ENCODE measurements at regions of chr5 and their contacts with region 1.

Region 1: DNA sequence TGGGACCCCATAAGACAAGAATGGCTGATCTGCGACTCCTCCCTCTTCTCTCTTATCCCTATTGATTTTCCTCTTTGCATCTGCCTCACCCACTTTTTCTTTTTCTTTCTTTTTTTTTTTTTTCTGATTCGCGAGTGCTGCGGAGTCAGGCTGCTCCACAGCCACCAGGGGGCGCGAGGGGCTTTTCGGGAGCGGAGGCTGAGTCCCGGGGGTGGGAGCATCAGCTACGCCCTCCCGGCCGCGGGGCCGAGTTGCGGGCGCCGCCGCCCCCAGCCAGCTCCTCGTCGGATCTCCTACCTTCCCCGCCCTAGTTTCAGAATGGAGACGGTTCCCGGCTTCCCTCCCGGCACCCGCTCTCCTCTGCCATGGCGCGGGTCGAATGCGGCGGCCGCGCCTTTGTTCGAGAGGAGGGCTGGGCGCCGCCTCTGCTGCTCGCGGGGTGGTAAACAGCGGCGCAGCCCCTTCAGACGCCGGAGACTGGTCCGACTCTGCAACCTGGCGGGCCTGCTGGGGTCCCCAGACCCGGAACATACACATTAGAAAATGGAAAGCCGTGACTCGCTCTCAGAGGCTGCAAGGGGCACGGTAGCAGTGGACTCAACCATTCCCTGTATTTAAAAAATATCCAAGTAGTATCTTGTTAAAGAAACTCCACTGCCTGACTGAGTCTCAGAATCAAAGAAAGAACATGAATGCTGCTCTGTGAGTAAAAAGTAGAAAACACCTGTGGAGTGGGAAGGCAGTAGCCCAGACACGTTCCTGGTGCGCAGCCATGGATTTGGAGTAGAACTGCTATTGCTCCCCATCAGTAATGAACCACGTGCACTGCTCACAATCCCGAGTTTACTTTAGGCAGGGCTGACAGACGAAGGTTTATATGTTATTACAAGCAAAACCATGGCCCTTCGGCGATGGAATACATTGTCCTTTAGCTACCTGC is 55.7 kb downstream of the DPYSL3 start:
- DNase-seq: peak; percentile 72 to 74
- ATAC-seq: peak; percentile 76 to 80
- H3K4me3 ChIP-seq: peak overlapping the region; percentile 77 to 95 (median 82)
- H3K27ac ChIP-seq: peak overlapping the region; percentile 79 to 92 (median 90)
- H3K4me1 ChIP-seq: peaks cover 34 to 47% of the 10 kb centered on the region in 2 donors
- H3K27me3 ChIP-seq: no peaks in the 10 kb centered on the region
- CTCF ChIP-seq: peak; percentile 77 to 96 (median 88)
- POLR2A ChIP-seq: no peak

Region 2: DNA sequence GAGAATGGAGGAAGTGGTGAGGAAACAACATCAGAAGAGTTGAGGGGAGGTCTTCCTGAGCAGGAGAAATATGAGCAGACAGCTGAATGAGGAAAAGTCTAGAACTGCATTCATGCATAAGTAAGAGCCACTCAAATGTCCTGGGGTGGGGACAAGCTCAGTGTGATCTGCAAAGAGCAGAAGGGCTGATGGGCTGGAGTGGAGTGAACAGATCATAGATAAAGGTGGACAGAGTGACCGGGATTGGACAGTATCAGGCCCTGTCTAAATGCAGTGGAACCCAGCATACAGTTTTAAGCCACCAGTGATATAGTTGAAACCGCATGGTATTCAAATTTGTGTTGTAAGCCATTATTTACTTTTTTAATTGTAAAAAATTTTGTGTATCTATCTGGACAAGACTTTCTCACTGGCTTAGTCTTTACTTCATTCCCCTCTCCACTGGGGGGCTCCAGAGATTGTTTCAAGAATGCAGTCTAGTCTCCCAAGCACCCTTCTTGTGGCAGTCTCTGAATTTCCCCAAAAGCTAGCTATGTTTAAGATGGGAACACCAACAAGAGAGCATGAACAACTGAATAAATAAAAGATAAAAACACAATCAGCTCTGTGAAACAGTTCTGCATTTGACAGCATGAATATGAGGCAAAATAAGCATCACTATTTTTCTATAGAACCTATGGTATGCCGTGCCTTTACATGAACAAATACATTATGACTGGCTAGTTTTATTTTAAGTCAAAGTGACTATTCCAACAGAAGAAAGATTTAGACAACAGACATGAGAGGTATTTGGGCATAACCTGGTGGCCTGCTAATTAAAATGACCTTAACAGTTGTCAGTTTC is 230.0 kb before region 1 on chr5:
- in situ Hi-C with region 1: no loop called
- intact Hi-C with region 1: loop called (anchors 5 kb)
- DNase-seq: no peak
- ATAC-seq: peak; percentile 56 to 69
- H3K4me3 ChIP-seq: no peak overlapping the region
- H3K27ac ChIP-seq: no peak overlapping the region
- H3K4me1 ChIP-seq: no peaks in the 10 kb centered on the region
- H3K27me3 ChIP-seq: no peaks in the 10 kb centered on the region
- CTCF ChIP-seq: peak; percentile 18 to 64 (median 46)
- POLR2A ChIP-seq: no peak

Region 3: GRCh38 chr5:147407094-147407681 is 47.0 kb before region 1 on chr5:
- in situ Hi-C with region 1: no loop called
- intact Hi-C with region 1: loop called (anchors 2 kb)
- DNase-seq: no peak
- ATAC-seq: no peak
- H3K4me3 ChIP-seq: no peak overlapping the region
- H3K27ac ChIP-seq: peak overlapping the region; percentile 91 to 97 (median 92)
- H3K4me1 ChIP-seq: peaks cover 58 to 67% of the 10 kb centered on the region in 2 donors
- H3K27me3 ChIP-seq: no peaks in the 10 kb centered on the region
- CTCF ChIP-seq: no peak
- POLR2A ChIP-seq: no peak

Region 4: DNA sequence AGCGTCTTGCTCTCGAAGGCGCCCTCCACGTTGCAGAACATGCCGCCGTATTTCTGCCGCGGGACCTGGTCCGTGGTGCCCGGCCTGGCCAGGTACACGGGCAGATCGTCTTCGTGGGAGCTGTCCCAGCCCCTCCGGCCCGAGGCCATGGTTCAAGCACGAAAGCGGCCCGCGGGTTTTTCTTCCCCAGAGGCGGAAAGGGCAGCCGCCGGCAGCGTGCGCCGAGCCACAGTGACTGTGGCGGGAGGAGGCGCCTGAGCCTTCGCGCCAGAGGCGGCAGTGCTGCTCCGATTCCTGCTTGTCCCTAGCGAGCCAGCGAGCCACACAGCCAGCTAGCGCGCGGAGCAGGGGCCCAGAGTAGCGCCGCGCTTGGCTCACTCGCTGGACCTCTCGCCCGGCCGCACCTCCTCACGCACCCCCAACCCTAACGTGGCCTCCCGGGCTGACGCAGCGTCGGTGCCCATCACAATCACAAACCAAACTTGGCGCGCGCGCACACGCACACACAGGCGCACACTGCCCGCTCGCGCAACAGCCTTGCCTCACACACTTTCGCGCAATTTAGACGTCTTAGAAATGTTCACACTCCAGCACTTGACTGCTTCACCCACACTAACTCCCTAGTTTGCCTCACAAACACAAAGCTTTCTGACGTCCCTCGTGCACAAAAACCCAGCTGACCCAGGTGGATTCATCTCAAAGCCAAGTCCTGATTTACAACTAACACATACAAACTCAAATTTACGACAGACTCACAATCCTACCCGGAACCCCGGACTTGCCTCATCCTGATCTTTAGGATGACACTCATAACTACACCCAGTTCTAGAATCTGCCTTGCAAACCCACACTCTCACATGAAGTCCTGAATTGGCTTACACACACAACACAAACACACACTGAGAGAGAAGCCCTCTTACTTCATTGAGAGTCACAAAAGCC is 55.8 kb after region 1 on chr5 and contains the start of gene DPYSL3:
- in situ Hi-C with region 1: no loop called
- intact Hi-C with region 1: loop called (anchors 2 kb)
- DNase-seq: peak; percentile 29 to 51
- ATAC-seq: peak; percentile 87 to 89
- H3K4me3 ChIP-seq: peak within 1 kb of the TSS; percentile 66 to 91 (median 76)
- H3K27ac ChIP-seq: peak within 1 kb of the TSS; percentile 57 to 71 (median 68)
- H3K4me1 ChIP-seq: peaks cover 0 to 13% of the 10 kb centered on the region in 2 donors
- H3K27me3 ChIP-seq: no peaks in the 10 kb centered on the region
- CTCF ChIP-seq: peak in 3 of 5 experiments; percentile 1 to 41 (median 36)
- POLR2A ChIP-seq: peak; percentile 16 to 17
- total RNA-seq, gene DPYSL3: 11.7 to 45.8 (median 26.0) TPM

Region 5: GRCh38 chr5:147558826-147559225 is 104.7 kb after region 1 on chr5:
- in situ Hi-C with region 1: loop called in 3 of 4 experiments (anchors 5 to 25 kb)
- intact Hi-C with region 1: loop called (anchors 1 kb)
- DNase-seq: peak; percentile 11 to 40
- ATAC-seq: peak; percentile 87 to 92
- H3K4me3 ChIP-seq: no peak overlapping the region
- H3K27ac ChIP-seq: no peak overlapping the region
- H3K4me1 ChIP-seq: peaks cover 0 to 10% of the 10 kb centered on the region in 2 donors
- H3K27me3 ChIP-seq: no peaks in the 10 kb centered on the region
- CTCF ChIP-seq: peak; percentile 56 to 73 (median 66)
- POLR2A ChIP-seq: no peak

Region 6: DNA sequence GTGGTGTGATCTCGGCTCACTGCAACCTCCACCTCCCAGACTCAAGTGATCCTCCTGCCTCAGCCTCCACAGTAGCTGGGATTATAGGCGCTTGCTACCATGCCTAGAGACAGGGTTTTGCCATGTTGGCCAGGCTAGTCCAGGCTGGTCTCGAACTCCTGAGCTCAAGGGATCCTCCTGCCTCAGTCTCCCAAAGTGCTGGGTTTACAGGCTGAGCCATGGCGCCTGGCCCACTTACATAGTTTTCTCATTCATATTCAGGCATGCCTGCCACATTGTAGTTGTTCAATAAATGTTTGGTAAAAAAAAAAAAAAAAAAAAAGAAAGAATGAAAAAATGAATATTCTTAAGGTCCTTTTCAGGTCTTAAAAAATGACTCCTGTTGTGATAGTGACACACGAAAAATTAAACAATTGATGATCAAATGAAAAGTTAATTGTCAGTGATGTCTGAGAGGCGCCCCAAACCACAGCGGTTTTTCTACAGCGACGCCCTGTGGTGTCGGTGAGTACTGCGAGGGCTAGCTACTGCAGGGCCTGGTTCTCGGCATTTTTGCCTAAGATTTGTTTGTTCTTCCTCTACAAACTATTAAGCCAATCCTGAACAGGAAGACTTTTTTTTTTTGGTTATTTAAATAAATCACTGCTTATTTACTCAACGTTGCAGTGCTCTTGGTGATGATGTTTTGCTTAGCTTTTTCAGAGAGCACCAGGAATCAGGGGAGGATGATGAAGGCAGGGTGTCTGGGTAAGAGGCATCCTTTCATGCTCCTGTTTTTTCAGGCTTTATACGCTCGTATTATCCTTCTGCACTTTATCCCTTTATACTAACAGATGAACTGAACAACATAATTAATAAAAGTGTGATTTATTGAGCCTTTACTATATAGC is 122.7 kb after region 1 on chr5:
- in situ Hi-C with region 1: loop called in 1 of 4 experiments (anchors 25 kb)
- intact Hi-C with region 1: loop called (anchors 5 kb)
- DNase-seq: peak in 1 of 2 donors; percentile 15
- ATAC-seq: peak in 1 of 2 donors; percentile 49
- H3K4me3 ChIP-seq: no peak overlapping the region
- H3K27ac ChIP-seq: no peak overlapping the region
- H3K4me1 ChIP-seq: peaks cover 0 to 3% of the 10 kb centered on the region in 2 donors
- H3K27me3 ChIP-seq: no peaks in the 10 kb centered on the region
- CTCF ChIP-seq: peak; percentile 43 to 80 (median 65)
- POLR2A ChIP-seq: no peak